ENCODE measurements at regions of chr1 and their contacts with region 1.

Region 1: DNA sequence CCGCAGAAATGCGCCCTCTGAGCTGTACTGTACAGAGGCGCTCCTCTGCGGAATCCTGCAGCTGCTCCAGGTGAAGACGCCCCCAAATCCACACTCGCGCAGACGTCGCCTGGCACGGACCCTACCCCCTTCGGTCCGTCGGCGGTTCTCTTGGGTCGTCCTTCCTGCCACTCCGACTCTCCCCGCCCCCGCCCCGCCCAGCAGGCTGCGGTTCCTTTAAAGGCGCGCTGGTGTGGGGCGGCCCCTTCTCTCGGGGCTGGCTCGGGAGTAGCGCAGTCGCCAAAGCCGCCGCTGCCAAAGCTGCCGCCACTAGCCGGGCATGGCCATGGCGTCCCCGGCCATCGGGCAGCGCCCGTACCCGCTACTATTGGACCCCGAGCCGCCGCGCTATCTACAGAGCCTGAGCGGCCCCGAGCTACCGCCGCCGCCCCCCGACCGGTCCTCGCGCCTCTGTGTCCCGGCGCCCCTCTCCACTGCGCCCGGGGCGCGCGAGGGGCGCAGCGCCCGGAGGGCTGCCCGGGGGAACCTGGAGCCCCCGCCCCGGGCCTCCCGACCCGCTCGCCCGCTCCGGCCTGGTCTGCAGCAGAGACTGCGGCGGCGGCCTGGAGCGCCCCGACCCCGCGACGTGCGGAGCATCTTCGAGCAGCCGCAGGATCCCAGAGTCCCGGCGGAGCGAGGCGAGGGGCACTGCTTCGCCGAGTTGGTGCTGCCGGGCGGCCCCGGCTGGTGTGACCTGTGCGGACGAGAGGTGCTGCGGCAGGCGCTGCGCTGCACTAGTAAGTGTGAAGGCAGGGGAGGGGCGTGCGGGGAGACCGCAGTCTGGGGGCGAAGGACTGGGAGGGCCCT is at the start of gene RASSF5:
- DNase-seq: peak; percentile 60 to 88 (median 77)
- ATAC-seq: peak; percentile 89
- H3K4me3 ChIP-seq: peak within 1 kb of the TSS; percentile 58 to 62
- H3K4me3 Mint-ChIP-seq: peak within 1 kb of the TSS; percentile 84
- H3K27ac ChIP-seq: no peak within 1 kb of the TSS
- H3K27ac Mint-ChIP-seq: no peak within 1 kb of the TSS
- H3K4me1 ChIP-seq: peaks cover 9% of the 10 kb centered on the region
- H3K4me1 Mint-ChIP-seq: peaks cover 46% of the 10 kb centered on the region
- H3K27me3 ChIP-seq: peaks cover 0 to 4% of the 10 kb centered on the region in 2 experiments
- H3K27me3 Mint-ChIP-seq: peaks cover 22% of the 10 kb centered on the region
- CTCF ChIP-seq: no peak
- total RNA-seq, gene RASSF5: 209 to 213 TPM

Region 2: GRCh38 chr1:206469933-206470691 is 37.4 kb before region 1 on chr1 and contains the start of gene IKBKE:
- CTCF ChIA-PET with region 1: interaction called, 3 read pairs
- POLR2A ChIA-PET with region 1: interaction called, 8 read pairs
- intact Hi-C with region 1: loop called in 1 of 2 experiments (anchors 5 kb)
- DNase-seq: peak in 7 of 9 experiments; percentile 29 to 77 (median 54)
- ATAC-seq: peak; percentile 49
- H3K4me3 ChIP-seq: peak within 1 kb of the TSS; percentile 89 to 98
- H3K4me3 Mint-ChIP-seq: peak within 1 kb of the TSS; percentile 91
- H3K27ac ChIP-seq: peak within 1 kb of the TSS; percentile 53 to 71
- H3K27ac Mint-ChIP-seq: peak within 1 kb of the TSS; percentile 91
- H3K4me1 ChIP-seq: peaks cover 67% of the 10 kb centered on the region
- H3K4me1 Mint-ChIP-seq: peaks cover 75% of the 10 kb centered on the region
- H3K27me3 ChIP-seq: no peaks in the 10 kb centered on the region
- H3K27me3 Mint-ChIP-seq: no peaks in the 10 kb centered on the region
- CTCF ChIP-seq: no peak
- total RNA-seq, gene IKBKE: 24.6 to 25.2 TPM

Measured in CD8-positive, alpha-beta T cell (primary cell).